ENCODE measurements at regions of chr1 and their contacts with region 1.

Region 1: DNA sequence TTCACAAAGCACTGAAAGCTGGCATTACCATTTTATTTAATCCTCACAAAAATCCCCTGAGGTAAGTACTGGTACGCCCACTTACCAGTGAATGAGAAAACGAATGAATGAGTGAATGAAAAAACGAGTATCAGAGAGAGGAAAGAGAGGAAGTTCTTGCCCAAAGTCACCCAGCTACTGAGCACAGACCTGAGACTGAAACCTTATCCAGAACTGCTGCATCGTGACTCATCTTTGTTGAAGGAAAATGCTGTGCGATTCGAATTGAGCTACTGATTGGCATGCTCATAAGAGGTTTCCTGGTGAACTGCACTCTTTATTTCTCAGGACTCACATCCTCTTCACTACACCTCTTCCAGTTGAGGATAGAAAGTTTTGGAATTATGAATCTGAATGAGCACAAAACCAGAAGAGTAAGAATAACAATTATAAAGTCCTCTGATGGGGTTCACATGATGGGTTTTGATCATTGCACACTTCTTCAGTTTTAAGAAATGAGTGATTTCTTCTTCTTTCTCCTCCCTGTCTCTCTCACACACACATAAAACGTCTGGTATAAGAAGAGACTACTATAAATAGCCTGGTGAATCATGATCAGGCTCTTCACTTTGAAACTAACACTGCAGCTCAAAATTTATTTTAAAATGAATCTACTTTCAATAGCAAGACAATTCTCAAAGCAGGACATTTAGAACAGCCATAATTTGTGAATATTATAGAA is 32.1 kb downstream of the IL12RB2 start:
- DNase-seq: peak; percentile 66
- H3K4me3 Mint-ChIP-seq: peak overlapping the region; percentile 1
- H3K27ac Mint-ChIP-seq: peak overlapping the region; percentile 97
- H3K4me1 Mint-ChIP-seq: peaks cover 77% of the 10 kb centered on the region
- H3K27me3 Mint-ChIP-seq: no peaks in the 10 kb centered on the region

Region 2: GRCh38 chr1:66282343-66282852 is 1057.4 kb before region 1 on chr1:
- CTCF ChIA-PET with region 1: no interaction called
- POLR2A ChIA-PET with region 1: no interaction called
- intact Hi-C with region 1: loop called (anchors 2 kb)
- DNase-seq: peak; percentile 80
- H3K4me3 Mint-ChIP-seq: no peak overlapping the region
- H3K27ac Mint-ChIP-seq: peak overlapping the region; percentile 76
- H3K4me1 Mint-ChIP-seq: peaks cover 87% of the 10 kb centered on the region
- H3K27me3 Mint-ChIP-seq: no peaks in the 10 kb centered on the region

Region 3: DNA sequence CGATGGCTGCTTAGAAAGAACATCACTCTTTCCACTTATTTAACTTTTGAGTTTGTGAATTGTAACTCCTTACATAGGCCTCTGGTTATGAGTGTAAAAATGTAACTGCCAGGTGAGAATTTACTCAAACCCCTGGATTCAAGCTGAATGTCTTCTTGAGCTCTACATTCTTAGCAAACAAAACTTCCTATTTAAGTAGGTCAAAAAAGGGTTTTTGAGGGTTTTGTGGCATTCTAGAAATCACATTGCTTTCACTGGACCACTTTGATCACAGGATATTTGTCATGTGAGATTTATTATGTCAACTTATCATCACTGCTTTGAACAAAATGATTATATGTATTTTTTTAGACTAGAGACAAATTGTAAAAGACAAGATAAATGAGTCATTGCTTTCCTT is 167.8 kb before region 1 on chr1:
- CTCF ChIA-PET with region 1: interaction called, 3 read pairs
- POLR2A ChIA-PET with region 1: interaction called, 17 read pairs
- intact Hi-C with region 1: loop called (anchors 1 kb)
- DNase-seq: no peak
- H3K4me3 Mint-ChIP-seq: peak overlapping the region; percentile 74
- H3K27ac Mint-ChIP-seq: peak overlapping the region; percentile 99
- H3K4me1 Mint-ChIP-seq: peaks cover 72% of the 10 kb centered on the region
- H3K27me3 Mint-ChIP-seq: peaks cover 5% of the 10 kb centered on the region

Region 4: GRCh38 chr1:67274623-67275325 is 65.0 kb before region 1 on chr1:
- CTCF ChIA-PET with region 1: interaction called, 3 read pairs
- POLR2A ChIA-PET with region 1: interaction called, 32 read pairs
- intact Hi-C with region 1: loop called (anchors 1 kb)
- DNase-seq: peak; percentile 27
- H3K4me3 Mint-ChIP-seq: no peak overlapping the region
- H3K27ac Mint-ChIP-seq: peak overlapping the region; percentile 75
- H3K4me1 Mint-ChIP-seq: peaks cover 51% of the 10 kb centered on the region
- H3K27me3 Mint-ChIP-seq: peaks cover 2% of the 10 kb centered on the region

Region 5: DNA sequence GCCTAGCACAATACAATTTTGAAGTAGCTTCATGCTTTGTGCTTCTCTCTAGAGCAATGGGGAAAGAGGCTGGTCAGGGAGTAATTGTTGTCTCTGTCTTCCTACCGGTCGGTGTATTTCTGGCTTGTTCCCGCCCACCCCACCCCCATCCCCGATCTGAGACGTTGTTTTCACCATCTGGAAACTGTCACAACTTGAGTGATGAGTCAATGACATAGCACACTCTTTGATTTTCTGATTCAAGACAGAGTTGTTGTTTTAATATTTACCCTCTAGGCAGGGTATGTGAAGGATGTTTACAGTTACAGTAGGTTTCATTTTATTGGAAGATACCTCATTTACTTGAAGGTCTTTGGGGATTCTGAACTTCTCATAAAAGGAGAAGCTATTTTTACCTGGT is 25.1 kb before region 1 on chr1:
- CTCF ChIA-PET with region 1: interaction called, 10 read pairs
- POLR2A ChIA-PET with region 1: interaction called, 23 read pairs
- intact Hi-C with region 1: loop called (anchors 1 kb)
- DNase-seq: peak; percentile 53
- H3K4me3 Mint-ChIP-seq: peak overlapping the region; percentile 56
- H3K27ac Mint-ChIP-seq: peak overlapping the region; percentile 96
- H3K4me1 Mint-ChIP-seq: peaks cover 48% of the 10 kb centered on the region
- H3K27me3 Mint-ChIP-seq: no peaks in the 10 kb centered on the region

Region 6: DNA sequence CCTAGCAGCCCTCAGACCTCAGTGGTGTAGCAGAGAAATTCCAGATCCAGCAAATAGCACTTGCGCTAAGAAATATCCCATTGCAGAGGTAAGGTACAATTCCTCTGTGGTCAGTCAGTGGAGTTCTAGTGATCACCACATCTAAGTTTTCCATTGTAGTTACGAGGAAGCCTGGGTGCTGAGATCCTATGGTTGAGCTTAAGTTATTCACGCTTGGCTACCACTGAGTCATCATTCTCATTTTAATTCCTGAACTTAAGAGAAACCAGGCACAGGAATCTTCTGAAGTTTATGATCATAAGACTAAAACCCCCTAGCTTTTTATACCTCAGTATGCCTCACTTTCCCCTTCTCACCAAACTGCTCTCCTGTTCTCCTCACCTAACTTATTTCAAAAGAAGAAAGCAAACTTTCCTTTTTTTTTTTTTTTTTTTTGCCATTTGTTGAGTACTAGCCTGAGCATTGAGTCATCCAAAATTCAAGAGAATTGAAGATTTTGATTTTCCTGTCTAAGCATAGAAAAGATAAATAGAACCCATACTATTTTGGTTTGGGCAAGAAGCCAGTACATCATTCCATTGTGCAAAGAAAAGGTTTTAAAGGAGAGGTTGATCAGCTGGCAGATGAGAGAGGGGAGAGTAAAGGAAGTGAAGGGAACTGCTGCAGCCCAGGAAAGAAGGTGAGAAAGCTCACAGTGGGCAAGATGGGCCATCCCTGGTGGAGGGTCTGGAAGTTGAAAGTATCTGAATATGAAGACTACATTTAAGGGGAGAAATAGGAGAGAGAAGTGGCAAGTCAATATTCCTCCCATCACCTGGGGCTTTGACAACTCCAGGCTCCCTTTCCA is 50.5 kb after region 1 on chr1:
- CTCF ChIA-PET with region 1: no interaction called
- POLR2A ChIA-PET with region 1: no interaction called
- intact Hi-C with region 1: no loop called
- DNase-seq: no peak
- H3K4me3 Mint-ChIP-seq: no peak overlapping the region
- H3K27ac Mint-ChIP-seq: no peak overlapping the region
- H3K4me1 Mint-ChIP-seq: peaks cover 6% of the 10 kb centered on the region
- H3K27me3 Mint-ChIP-seq: no peaks in the 10 kb centered on the region

Region 7: GRCh38 chr1:67430352-67431155 is 90.8 kb after region 1 on chr1 and contains the start of gene SERBP1:
- CTCF ChIA-PET with region 1: interaction called, 6 read pairs
- POLR2A ChIA-PET with region 1: interaction called, 14 read pairs
- intact Hi-C with region 1: loop called (anchors 1 kb)
- DNase-seq: peak; percentile 97
- H3K4me3 Mint-ChIP-seq: peak within 1 kb of the TSS; percentile 83
- H3K27ac Mint-ChIP-seq: peak within 1 kb of the TSS; percentile 97
- H3K4me1 Mint-ChIP-seq: peaks cover 50% of the 10 kb centered on the region
- H3K27me3 Mint-ChIP-seq: no peaks in the 10 kb centered on the region
- total RNA-seq, gene SERBP1: 388 to 398 TPM

Region 8: GRCh38 chr1:67515324-67516080 is 175.7 kb after region 1 on chr1:
- CTCF ChIA-PET with region 1: no interaction called
- POLR2A ChIA-PET with region 1: no interaction called
- intact Hi-C with region 1: no loop called
- DNase-seq: no peak
- H3K4me3 Mint-ChIP-seq: no peak overlapping the region
- H3K27ac Mint-ChIP-seq: no peak overlapping the region
- H3K4me1 Mint-ChIP-seq: no peaks in the 10 kb centered on the region
- H3K27me3 Mint-ChIP-seq: peaks cover 8% of the 10 kb centered on the region

Region 9: GRCh38 chr1:67723620-67724019 is 383.8 kb after region 1 on chr1:
- CTCF ChIA-PET with region 1: no interaction called
- POLR2A ChIA-PET with region 1: no interaction called
- intact Hi-C with region 1: loop called (anchors 10 kb)
- DNase-seq: peak; percentile 31
- H3K4me3 Mint-ChIP-seq: no peak overlapping the region
- H3K27ac Mint-ChIP-seq: no peak overlapping the region
- H3K4me1 Mint-ChIP-seq: peaks cover 9% of the 10 kb centered on the region
- H3K27me3 Mint-ChIP-seq: no peaks in the 10 kb centered on the region

Region 10: GRCh38 chr1:67760030-67760821 is 420.4 kb after region 1 on chr1:
- CTCF ChIA-PET with region 1: no interaction called
- POLR2A ChIA-PET with region 1: no interaction called
- intact Hi-C with region 1: no loop called
- DNase-seq: peak; percentile 65
- H3K4me3 Mint-ChIP-seq: no peak overlapping the region
- H3K27ac Mint-ChIP-seq: no peak overlapping the region
- H3K4me1 Mint-ChIP-seq: no peaks in the 10 kb centered on the region
- H3K27me3 Mint-ChIP-seq: peaks cover 17% of the 10 kb centered on the region

Region 11: DNA sequence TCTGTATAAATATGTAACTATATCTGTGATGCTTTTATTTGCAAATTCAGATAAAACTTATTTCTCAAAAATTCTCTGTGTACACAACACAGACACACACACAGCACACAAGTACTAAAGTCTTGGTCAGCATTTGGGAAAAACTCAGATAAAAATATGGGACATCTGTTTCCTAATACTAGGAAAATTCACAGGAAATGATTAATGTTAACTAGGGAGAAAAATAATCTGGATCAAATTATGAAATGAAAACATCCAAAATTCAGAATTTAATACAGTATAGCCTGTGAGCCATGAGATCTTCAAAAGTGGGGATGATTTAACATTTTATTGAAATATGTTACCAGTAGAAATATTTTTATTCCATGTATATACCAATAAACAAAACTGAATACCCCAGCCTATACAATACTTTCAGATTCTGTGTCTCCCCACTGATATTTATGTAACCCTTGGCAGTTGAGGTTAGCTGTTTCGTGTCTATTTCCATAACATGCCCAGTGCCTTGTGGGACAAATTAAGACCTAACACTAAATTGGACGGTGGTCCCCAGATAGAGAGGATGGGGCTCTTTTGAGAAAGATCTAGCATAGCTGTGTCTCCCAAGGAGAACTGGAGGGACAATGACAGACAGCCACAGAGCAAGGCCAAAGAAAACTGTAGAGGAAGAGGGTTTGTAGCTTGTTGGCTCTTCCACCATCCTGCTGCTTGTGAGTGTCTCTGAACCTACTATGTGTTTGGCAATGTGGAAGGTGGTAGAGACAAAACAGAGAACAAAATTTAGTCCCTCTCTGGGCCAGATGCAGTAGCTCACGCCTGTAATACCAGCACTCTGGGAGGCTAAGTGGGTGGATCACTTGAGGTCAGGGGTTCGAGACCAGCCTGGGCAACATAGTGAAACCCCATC is 446.3 kb after region 1 on chr1:
- CTCF ChIA-PET with region 1: no interaction called
- POLR2A ChIA-PET with region 1: no interaction called
- intact Hi-C with region 1: no loop called
- DNase-seq: no peak
- H3K4me3 Mint-ChIP-seq: no peak overlapping the region
- H3K27ac Mint-ChIP-seq: no peak overlapping the region
- H3K4me1 Mint-ChIP-seq: no peaks in the 10 kb centered on the region
- H3K27me3 Mint-ChIP-seq: peaks cover 2% of the 10 kb centered on the region